ENCODE measurements at regions of chr18 and their contacts with region 1.

Region 1: DNA sequence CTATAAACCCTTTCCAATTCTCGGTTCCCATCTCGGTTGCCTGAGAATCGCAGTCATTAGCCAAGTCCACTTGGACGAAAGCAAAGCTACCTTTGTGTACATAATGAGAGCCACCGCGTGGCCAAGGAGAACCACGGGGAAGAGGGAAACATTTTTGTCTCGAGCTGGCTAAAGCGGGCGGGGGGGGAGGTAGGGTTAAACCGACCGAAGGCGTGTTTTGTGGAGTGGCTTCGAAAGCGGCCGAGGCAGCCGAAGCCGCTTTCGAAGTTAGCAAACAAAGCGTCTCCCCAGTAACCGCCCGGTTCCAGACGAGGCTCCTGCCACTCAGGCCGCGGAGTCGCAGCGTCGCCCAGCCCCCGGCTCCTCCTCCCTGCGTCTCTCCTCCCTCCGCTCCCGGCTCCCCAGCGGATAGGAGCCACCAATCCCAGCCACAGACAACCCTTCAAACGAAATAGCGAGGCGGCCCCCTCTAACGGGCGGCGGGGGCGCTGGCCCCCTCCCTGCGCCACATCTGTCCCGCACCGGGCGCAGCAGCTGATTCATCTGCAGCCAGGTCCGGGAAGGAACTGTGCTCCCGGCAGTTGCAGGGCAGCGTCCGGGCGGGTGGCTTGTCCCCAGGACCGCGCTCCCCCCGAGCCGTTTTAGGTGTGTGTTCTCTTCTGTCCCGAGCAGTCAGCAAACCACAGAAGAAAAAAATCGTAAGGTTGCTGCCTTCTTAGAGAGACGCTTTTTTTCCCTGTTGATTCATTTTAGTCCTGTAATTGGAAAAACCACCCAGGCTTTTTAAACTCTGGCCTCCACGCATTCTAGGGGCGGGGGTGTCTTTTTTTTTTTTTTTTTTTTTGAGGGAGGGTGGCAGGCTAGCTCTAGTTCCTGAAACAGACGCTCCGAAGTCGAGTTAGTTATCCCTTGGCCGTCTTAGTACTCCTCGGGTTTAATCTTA is 1.8 kb upstream of the TGIF1 start:
- DNase-seq: peak; percentile 88
- H3K4me3 ChIP-seq: peak overlapping the region; percentile 89
- H3K27ac ChIP-seq: peak overlapping the region; percentile 99
- H3K27me3 ChIP-seq: no peaks in the 10 kb centered on the region
- CTCF ChIP-seq: peak; percentile 18; the same call in 1 of the 2 replicates

Region 2: DNA sequence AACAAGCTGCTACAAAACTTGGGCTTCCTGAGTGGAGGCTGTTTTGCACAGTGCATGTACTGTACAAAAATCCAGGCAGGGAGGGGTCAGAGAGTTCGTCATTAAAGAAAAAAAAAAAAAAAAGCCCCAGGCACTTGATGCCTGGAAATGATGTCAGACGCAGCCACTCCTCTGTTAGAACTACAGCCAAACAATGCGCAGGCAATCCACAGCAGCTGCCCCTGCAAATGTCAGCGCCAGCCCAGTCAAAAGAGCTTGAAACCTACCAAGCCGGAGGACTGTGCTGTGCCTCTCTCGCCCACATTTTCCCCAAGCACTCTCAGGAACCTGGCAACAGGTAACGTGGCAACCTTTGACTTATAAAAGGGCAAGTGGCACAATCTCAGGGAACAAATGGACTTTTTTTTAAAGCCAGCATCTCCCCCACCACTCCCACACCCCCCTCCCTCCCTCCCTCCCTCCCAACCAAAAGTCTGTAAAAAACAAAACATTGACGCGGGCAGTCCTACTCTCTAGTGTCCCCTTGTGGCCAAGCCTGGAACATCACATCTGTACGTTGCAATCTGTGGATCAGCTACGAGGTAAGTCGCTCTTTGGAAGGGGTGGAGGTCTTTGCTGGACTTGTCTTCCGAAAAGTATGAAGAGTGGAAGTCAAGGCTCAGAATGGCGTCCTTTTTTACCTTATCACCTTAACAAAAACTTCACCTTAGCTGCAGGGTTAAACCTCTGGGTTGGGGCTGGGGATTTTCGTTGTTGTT is 145.9 kb after region 1 on chr18:
- CTCF ChIA-PET with region 1: interaction called, 58 read pairs
- POLR2A ChIA-PET with region 1: interaction called, 44 read pairs
- DNase-seq: peak; percentile 96
- H3K4me3 ChIP-seq: peak overlapping the region; percentile 76
- H3K27ac ChIP-seq: peak overlapping the region; percentile 100
- H3K27me3 ChIP-seq: no peaks in the 10 kb centered on the region
- CTCF ChIP-seq: peak; percentile 89

Region 3: DNA sequence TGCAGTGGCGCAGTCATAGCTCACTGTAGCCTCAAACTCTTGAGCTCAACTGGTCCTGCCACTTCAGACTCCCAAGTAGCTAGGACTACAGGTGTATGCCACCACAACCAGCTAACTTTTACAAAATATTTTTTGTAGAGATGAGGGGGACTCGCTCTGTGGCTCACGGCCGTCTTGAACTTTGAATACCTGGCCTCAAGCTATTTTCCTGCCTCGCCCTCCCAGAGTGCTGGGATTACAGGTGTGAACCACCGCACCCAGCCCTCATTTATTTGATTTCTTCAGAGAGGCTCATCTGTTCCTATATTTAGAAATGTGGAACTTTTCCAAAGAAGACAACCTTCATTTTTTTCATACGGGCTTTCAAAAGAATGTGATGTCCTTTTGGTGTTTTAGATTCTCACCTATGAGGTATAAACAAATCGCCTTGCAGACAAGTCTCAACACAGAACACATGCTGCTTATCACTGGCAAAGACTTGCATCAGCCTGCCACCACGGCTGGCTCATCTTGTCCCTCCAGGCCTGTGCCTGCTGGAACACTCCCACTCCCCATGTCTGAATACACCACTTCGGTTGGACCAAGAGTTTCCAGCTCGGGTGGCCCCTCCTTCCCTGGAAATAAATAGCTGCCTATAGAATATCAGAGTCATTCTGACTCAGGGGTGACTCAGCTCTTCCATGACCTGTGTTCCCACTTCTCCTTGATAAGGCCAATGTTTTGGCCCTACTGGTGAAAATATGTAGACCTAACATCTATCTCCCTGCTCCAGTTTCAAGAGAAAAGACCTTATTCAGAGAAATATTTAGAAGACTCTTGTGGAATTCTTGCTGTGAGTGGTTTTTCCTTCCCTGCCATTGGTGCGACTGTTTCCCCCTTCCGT is 204.5 kb after region 1 on chr18:
- CTCF ChIA-PET with region 1: no interaction called
- POLR2A ChIA-PET with region 1: interaction called, 27 read pairs
- DNase-seq: peak; percentile 92
- H3K4me3 ChIP-seq: no peak overlapping the region
- H3K27ac ChIP-seq: peak overlapping the region; percentile 96
- H3K27me3 ChIP-seq: no peaks in the 10 kb centered on the region
- CTCF ChIP-seq: peak; percentile 33; the same call in 1 of the 2 replicates